ENCODE measurements at regions of chr12 and their contacts with region 1.

Region 1: GRCh38 chr12:91361864-91362263 is 179.2 kb upstream of the DCN start:
- DNase-seq: no peak
- ATAC-seq: peak in 1 of 2 donors; percentile 50

Region 2: GRCh38 chr12:90925562-90925961 is 436.3 kb before region 1 on chr12:
- intact Hi-C with region 1: no loop called
- DNase-seq: no peak
- ATAC-seq: no peak

Region 3: DNA sequence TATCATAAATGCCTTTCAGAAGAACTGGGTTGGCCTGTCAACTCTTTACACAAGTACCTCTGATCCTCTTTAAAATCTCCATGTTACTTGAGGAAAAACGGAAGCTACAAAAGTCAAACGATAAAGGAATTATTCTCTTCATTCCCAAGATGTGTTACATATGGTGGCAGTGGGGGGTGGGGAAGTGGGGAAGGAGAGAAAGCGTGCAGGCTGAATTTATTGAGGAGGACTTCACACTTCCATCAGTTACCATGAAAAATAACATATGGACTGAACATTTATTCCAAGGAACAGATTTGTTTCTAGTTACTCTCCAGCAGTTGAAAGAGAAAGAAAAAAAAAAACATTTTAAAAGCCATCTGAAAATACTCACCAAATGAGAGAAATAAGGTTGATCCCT is 295.2 kb after region 1 on chr12:
- intact Hi-C with region 1: no loop called
- DNase-seq: no peak
- ATAC-seq: no peak

Region 4: DNA sequence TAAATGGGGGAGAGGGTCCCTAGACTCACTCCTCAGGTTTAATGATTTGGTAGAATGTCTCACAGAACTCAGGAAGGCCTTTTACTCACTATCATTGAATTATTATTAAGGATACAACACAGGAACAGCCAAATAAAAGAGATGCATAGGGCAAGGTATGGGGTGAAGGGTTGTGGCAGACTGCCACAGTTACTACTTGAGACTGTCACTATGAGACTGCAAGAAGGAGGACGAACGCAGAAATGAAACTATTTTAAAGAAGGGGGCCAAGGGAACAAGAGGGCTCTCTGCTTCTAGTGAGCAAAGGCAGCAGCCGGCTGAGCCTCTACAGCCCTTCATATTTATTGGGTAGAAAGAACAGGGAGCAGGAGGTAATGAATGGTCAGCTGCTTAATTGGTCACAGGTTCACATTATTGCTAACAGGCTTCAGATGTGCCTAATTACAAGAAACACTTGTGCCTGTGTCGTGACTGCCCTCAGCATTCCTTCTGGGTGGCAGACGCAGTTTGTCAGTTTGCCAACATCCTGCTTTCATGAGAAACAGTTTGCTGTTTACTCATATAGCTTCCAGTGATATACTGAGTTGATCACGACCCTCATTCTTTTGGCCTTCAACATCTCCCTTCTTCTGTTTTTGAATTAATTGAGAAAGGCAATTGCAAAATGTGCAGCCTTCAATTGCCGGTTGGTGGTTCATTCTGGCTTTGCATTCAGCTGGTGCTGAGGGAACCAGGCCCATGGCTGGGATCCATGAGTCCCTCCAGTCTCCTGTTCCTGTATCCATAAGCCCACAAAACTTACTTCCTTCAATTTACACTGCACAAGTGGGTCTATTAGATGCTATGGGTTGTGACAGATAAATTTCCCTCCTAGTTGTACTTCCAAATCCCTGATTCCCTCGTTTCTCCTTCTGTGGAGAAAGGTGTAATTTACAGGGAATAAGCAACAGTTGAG is 1258.1 kb after region 1 on chr12:
- intact Hi-C with region 1: loop called in 1 of 2 experiments (anchors 10 kb)
- DNase-seq: no peak
- ATAC-seq: no peak

Region 5: DNA sequence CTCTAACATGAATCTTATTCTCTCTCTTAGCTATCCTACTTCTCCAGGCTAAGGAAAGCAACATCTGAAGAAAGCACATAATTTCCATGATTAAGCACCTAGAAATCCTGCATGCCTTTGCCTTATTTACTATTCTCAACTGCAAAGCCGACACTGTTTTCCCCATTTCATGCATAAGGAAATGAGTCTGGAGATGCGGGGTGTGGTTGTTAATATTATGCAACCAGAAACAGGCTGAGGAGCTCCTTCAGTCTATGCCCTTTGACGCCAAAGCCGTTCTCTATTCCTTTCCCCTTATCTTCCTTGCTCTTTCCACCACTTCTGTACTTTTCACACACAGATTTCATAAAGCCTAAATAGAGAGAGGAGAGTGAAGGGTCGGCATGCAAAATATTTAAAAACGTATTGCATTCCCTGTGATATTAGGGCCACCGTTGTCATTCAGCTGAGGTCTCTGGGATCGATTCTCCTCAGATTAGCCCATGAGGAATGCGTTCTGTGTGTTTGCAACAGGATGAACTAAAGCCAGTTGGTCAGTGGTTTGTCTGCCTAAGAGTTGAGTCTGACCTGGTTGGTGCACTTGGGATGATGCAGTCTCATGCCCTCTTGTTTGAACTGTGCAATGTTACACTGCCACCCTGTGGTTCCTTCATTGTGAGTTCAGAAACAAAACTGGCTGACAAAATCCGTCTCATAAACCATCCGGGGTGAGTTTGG is 1287.8 kb after region 1 on chr12:
- intact Hi-C with region 1: loop called in 1 of 2 experiments (anchors 5 kb)
- DNase-seq: peak; percentile 35
- ATAC-seq: peak; percentile 92 to 94